ENCODE measurements at regions of chr14 and their contacts with region 1.

Region 1: GRCh38 chr14:20782280-20782890 is 1.3 kb downstream of the RNASE6 start:
- H3K4me3 Mint-ChIP-seq: peak overlapping the region; percentile 100
- H3K27ac Mint-ChIP-seq: peak overlapping the region; percentile 99
- H3K4me1 Mint-ChIP-seq: peaks cover 58% of the 10 kb centered on the region
- H3K27me3 Mint-ChIP-seq: no peaks in the 10 kb centered on the region

Region 2: GRCh38 chr14:19918044-19918443 is 864.3 kb before region 1 on chr14:
- intact Hi-C with region 1: no loop called
- H3K4me3 Mint-ChIP-seq: no peak overlapping the region
- H3K27ac Mint-ChIP-seq: no peak overlapping the region
- H3K4me1 Mint-ChIP-seq: no peaks in the 10 kb centered on the region
- H3K27me3 Mint-ChIP-seq: no peaks in the 10 kb centered on the region

Region 3: DNA sequence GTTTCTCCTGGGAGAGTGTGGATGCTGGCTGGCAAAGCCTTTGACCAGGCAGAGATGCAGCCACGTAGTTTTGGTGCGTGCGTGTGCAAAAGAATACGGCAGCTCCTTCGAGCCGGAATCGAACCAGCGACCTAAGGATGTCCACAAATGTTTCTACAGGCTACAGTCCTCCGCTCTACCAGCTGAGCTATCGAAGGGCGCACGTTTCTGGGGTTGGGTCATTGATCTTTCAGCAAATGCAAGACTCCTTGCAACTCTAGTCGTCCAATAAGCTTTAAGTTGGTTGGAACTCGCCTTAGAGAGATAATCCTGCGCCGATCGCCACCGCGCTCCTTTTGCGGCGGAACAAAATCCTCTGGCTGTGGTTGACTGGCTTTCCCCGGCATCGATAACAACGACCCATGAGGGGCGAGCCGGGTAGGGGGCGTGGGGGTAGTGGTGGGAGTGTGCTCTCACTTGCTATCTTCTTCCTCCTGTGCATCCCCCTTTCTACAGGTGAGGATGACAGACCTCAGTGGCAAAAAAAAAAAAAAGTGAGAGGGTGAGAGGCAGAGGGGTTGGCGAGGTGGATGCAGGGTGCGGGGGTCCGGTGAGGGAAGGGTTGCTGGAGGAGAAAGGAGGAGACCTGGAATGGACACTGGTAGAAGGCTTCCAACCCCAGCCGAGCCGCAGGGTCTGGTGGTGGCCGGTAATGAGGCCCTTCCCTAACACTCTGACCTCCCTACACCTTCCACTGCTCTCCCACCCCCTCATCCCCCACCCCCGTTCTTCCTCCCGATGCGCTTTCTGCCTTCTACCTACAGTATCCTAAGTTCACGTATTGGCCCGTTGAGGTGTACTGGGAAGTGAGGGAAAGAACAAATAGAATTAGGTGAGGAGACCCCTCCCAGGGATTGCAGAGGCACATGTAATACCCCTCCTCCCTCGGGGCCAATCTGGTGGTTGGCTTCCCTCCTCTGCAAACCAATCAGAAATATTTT is 129.1 kb before region 1 on chr14:
- intact Hi-C with region 1: no loop called
- H3K4me3 Mint-ChIP-seq: no peak overlapping the region
- H3K27ac Mint-ChIP-seq: no peak overlapping the region
- H3K4me1 Mint-ChIP-seq: peaks cover 16% of the 10 kb centered on the region
- H3K27me3 Mint-ChIP-seq: peaks cover 81% of the 10 kb centered on the region

Region 4: DNA sequence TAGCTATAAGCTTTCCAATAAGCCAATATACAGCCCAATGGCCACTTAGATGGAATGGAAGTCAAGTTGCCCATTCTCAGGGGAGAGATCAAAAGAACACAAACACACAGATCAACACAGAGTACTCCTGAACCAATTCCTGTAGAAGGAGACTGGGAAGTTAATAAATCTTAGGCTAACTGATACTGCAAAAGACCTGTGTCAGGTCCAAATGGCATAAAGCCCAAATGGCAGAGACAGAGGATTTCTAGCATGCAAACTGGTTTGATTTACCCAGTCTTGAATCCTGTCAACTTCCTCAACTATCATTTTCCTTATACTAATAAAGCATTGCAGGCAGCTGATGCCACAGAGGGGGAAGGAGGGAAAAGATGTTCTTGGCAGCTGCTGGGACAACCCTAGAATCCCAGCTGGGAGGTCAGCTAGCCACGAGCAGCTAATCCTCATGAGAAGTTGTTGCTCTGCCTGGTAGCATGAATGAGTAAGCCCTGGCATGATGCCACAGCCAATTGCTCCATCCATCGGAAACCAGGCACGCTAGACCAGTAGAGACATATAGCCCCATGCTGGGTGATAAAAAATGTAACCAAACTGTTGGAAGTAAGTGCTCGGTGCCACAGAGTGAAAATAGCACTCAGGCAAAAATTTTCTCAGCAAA is 67.7 kb before region 1 on chr14:
- intact Hi-C with region 1: loop called (anchors 5 kb)
- H3K4me3 Mint-ChIP-seq: peak overlapping the region; percentile 59
- H3K27ac Mint-ChIP-seq: peak overlapping the region; percentile 96
- H3K4me1 Mint-ChIP-seq: peaks cover 58% of the 10 kb centered on the region
- H3K27me3 Mint-ChIP-seq: no peaks in the 10 kb centered on the region

Region 5: DNA sequence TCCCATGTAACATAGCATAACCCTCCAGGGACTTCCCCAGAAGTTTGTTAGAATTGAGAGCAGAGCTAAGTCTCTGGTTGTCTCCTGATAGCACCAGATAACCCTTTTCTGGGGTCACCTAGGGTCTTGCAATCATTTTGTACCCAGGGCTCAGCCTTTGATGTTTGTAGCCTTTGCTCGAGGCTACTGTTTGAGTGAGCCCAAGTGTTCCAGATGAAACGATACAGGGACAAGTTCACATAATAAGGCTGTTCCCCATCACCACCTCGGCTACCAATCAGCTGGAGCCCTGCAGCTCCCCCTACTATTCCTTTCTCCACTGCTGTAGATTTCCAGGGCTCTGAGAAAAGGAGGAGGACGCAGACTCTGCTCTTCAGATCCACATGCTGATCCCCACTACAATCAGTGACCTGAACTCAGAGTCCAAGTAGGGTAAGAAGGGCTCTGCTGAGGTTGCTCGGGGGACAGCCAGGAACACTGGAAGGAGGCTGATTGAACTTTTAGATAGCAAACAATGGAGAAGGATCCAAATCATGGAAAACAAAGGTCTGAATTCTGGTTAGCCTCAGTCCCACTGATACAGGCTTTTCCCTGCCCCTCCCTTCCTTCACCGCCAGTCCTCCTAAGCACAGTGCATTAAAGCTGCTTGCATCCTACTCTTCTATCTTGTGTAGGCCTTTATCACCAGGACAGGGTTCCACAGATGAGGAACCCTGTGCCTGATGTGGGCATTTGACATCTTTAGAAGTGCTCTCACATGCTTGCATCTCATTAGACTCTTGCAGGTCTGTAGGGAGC is 36.6 kb before region 1 on chr14 and contains the start of gene EDDM3A:
- intact Hi-C with region 1: no loop called
- H3K4me3 Mint-ChIP-seq: no peak within 1 kb of the TSS
- H3K27ac Mint-ChIP-seq: peak within 1 kb of the TSS; percentile 82
- H3K4me1 Mint-ChIP-seq: peaks cover 35% of the 10 kb centered on the region
- H3K27me3 Mint-ChIP-seq: no peaks in the 10 kb centered on the region

Region 6: DNA sequence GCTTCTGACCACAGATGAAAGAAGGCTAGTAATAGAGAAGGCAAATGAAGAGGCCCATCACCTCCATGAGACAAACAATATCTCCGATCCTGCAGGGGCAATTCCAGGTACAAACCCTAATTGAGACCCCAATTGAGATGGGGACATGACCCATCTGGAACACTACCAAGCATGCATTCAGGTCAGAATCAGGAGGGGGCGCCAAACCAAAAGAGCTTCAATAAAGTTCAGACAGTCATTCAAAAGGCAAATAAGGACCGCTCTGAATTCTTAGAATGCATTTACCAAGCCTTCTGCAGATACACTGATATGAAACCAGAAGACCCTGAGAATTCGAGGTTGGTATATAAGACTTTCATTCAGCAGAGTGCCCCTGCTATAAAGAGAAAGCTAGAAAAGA is 24.4 kb before region 1 on chr14:
- intact Hi-C with region 1: no loop called
- H3K4me3 Mint-ChIP-seq: no peak overlapping the region
- H3K27ac Mint-ChIP-seq: peak overlapping the region; percentile 67
- H3K4me1 Mint-ChIP-seq: peaks cover 17% of the 10 kb centered on the region
- H3K27me3 Mint-ChIP-seq: no peaks in the 10 kb centered on the region

Region 7: GRCh38 chr14:20799892-20800544 is 17.6 kb after region 1 on chr14:
- intact Hi-C with region 1: loop called (anchors 2 kb)
- H3K4me3 Mint-ChIP-seq: peak overlapping the region; percentile 87
- H3K27ac Mint-ChIP-seq: peak overlapping the region; percentile 93
- H3K4me1 Mint-ChIP-seq: peaks cover 74% of the 10 kb centered on the region
- H3K27me3 Mint-ChIP-seq: no peaks in the 10 kb centered on the region

Region 8: GRCh38 chr14:20820063-20820904 is 37.9 kb after region 1 on chr14:
- intact Hi-C with region 1: loop called (anchors 5 kb)
- H3K4me3 Mint-ChIP-seq: no peak overlapping the region
- H3K27ac Mint-ChIP-seq: peak overlapping the region; percentile 91
- H3K4me1 Mint-ChIP-seq: peaks cover 79% of the 10 kb centered on the region
- H3K27me3 Mint-ChIP-seq: no peaks in the 10 kb centered on the region

Region 9: GRCh38 chr14:20848316-20848954 is 66.0 kb after region 1 on chr14:
- intact Hi-C with region 1: loop called (anchors 5 kb)
- H3K4me3 Mint-ChIP-seq: no peak overlapping the region
- H3K27ac Mint-ChIP-seq: peak overlapping the region; percentile 72
- H3K4me1 Mint-ChIP-seq: peaks cover 39% of the 10 kb centered on the region
- H3K27me3 Mint-ChIP-seq: no peaks in the 10 kb centered on the region